MCF 10A (cell line): ENCODE measurements at regions of chr12 and their contacts with region 1.

Region 1: DNA sequence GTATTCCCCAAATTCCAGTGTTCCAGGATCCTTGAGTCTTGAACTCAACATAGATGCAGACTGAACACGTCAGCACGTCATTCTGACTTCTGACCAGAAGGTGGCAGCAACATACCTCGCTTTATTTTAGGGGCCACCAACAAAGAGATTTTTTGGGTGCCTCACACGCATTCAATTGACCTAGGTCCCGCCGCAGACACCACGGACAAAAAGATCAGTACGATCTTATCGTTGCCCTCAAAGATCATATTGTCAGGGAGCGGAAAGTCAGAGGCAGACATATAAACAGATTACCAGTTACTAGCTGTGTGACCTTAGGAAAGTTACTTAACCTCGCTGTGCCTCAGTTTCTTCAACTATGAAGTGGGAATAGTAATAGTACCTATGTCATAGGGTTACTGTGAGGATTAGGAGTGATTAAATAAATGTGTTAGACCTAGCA is 6.5 kb upstream of the PRPH start:
- DNase-seq: peak; percentile 70
- H3K4me3 Mint-ChIP-seq: no peak overlapping the region
- H3K27ac Mint-ChIP-seq: no peak overlapping the region
- H3K4me1 Mint-ChIP-seq: peaks cover 4% of the 10 kb centered on the region
- H3K27me3 Mint-ChIP-seq: no peaks in the 10 kb centered on the region
- CTCF ChIP-seq: peak; percentile 77

Region 2: GRCh38 chr12:48977315-48978281 is 310.8 kb before region 1 on chr12:
- CTCF ChIA-PET with region 1: no interaction called
- POLR2A ChIA-PET with region 1: no interaction called
- intact Hi-C with region 1: no loop called
- DNase-seq: peak; percentile 54
- H3K4me3 Mint-ChIP-seq: no peak overlapping the region
- H3K27ac Mint-ChIP-seq: no peak overlapping the region
- H3K4me1 Mint-ChIP-seq: peaks cover 6% of the 10 kb centered on the region
- H3K27me3 Mint-ChIP-seq: peaks cover 58% of the 10 kb centered on the region
- CTCF ChIP-seq: peak; percentile 77

Region 3: GRCh38 chr12:49274396-49275286 is 13.8 kb before region 1 on chr12:
- CTCF ChIA-PET with region 1: interaction called, 11 read pairs
- POLR2A ChIA-PET with region 1: interaction called, 6 read pairs
- intact Hi-C with region 1: no loop called
- DNase-seq: no peak
- H3K4me3 Mint-ChIP-seq: no peak overlapping the region
- H3K27ac Mint-ChIP-seq: peak overlapping the region; percentile 37
- H3K4me1 Mint-ChIP-seq: peaks cover 29% of the 10 kb centered on the region
- H3K27me3 Mint-ChIP-seq: no peaks in the 10 kb centered on the region
- CTCF ChIP-seq: no peak

Region 4: GRCh38 chr12:49323524-49324097 is 35.2 kb after region 1 on chr12:
- CTCF ChIA-PET with region 1: interaction called, 12 read pairs
- POLR2A ChIA-PET with region 1: no interaction called
- intact Hi-C with region 1: no loop called
- DNase-seq: no peak
- H3K4me3 Mint-ChIP-seq: peak overlapping the region; percentile 100
- H3K27ac Mint-ChIP-seq: peak overlapping the region; percentile 76
- H3K4me1 Mint-ChIP-seq: peaks cover 13% of the 10 kb centered on the region
- H3K27me3 Mint-ChIP-seq: no peaks in the 10 kb centered on the region
- CTCF ChIP-seq: no peak

Region 5: DNA sequence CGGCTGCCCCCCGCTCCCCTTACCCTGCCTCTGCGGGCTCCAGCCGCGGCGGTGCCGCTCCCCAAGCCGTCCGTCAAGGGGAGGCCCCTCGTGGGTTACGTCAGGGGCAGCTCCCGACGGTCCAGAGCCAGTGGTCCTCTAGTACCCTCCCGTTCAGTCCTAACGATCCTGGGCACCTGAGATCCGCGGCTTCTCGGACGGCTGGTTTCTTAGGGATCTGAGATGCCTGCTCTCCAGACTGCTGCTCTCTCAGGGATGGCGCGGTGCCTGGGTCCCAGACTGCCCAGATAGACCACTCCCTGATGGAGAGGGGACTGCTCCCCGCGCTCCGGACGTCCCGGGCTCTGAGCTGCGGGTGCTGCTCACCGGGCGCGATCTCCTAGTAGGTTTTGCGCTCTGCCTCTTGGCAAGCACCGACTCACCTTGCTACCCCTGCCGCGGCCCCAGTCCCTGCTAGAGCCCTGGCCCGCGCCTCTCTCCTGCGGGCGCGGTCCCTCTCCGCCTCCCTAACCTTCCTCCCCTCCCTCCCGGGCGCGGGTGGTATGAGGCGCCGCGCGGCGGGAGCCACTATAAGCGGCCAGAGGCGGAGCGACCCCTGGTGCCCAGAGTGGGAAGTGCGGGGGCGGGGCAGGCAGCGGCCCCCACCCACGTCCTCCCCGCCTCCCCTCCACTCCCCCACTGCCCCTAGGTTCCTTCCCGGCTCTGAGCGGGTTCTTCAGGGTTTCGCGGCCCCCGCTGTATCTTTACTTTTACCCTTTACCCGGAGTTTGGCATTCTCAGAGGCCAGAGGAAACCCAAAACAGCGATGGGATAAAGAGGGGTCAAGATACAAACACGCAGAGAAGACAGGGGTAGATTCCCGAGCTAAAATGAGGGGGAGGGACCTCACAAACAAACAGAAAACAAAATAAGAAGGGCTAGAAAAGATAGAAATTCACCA is 48.5 kb after region 1 on chr12 and contains the start of gene C1QL4:
- CTCF ChIA-PET with region 1: interaction called, 57 read pairs
- POLR2A ChIA-PET with region 1: interaction called, 6 read pairs
- intact Hi-C with region 1: loop called (anchors 5 kb)
- DNase-seq: peak; percentile 70
- H3K4me3 Mint-ChIP-seq: peak within 1 kb of the TSS; percentile 59
- H3K27ac Mint-ChIP-seq: no peak within 1 kb of the TSS
- H3K4me1 Mint-ChIP-seq: peaks cover 10% of the 10 kb centered on the region
- H3K27me3 Mint-ChIP-seq: peaks cover 15% of the 10 kb centered on the region
- CTCF ChIP-seq: peak; percentile 97
- total RNA-seq, gene C1QL4: 0.20 TPM in 1 of 2 replicates, not detected in the other

Region 6: GRCh38 chr12:49515266-49515665 is 226.8 kb after region 1 on chr12:
- CTCF ChIA-PET with region 1: interaction called, 35 read pairs
- POLR2A ChIA-PET with region 1: interaction called, 4 read pairs
- intact Hi-C with region 1: loop called (anchors 1 kb)
- DNase-seq: peak; percentile 69
- H3K4me3 Mint-ChIP-seq: no peak overlapping the region
- H3K27ac Mint-ChIP-seq: peak overlapping the region; percentile 49
- H3K4me1 Mint-ChIP-seq: peaks cover 15% of the 10 kb centered on the region
- H3K27me3 Mint-ChIP-seq: no peaks in the 10 kb centered on the region
- CTCF ChIP-seq: no peak